GM12878 (cell line): ENCODE measurements at regions of chr1 and their contacts with region 1.

Region 1: DNA sequence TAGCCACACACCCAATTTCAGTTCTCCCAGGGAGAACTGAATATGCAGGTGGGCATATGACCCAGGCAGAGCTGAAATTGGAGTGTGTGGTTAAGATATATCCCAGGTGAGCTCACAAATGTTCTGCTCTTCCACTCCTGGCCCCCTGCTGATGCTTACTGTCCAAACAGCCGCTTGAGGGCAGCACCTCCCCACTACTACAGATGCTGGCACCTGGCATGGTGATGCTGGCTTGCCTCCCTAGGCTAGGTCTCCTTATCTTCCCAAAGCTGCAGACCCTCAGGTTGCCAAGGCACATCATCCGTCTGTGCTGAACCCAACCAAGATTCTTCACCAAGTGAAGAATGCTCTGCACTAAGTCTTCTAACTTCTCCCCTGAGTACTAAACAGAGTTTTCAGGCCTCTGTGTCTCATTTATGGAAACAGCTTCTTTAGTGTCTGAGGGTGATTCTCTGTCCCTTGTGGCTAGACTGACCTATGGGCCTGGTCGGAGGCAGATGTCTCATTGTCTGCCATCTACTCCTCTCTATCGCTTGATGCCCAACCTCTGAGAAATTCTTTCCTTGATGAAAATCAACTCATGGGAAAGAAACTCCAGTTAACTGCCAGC is 27.2 kb downstream of the XCL1 start:
- DNase-seq: peak; percentile 7
- ATAC-seq: peak; percentile 99
- H3K4me3 ChIP-seq: no peak overlapping the region
- H3K27ac ChIP-seq: no peak overlapping the region
- H3K4me1 ChIP-seq: no peaks in the 10 kb centered on the region
- H3K27me3 ChIP-seq: no peaks in the 10 kb centered on the region; a peak in 1 of 4 replicates
- CTCF ChIP-seq: peak; percentile 76 to 92 (median 80)
- EP300 ChIP-seq: no peak
- POLR2A ChIP-seq: no peak
- RAD21 ChIP-seq: peak; percentile 97

Region 2: DNA sequence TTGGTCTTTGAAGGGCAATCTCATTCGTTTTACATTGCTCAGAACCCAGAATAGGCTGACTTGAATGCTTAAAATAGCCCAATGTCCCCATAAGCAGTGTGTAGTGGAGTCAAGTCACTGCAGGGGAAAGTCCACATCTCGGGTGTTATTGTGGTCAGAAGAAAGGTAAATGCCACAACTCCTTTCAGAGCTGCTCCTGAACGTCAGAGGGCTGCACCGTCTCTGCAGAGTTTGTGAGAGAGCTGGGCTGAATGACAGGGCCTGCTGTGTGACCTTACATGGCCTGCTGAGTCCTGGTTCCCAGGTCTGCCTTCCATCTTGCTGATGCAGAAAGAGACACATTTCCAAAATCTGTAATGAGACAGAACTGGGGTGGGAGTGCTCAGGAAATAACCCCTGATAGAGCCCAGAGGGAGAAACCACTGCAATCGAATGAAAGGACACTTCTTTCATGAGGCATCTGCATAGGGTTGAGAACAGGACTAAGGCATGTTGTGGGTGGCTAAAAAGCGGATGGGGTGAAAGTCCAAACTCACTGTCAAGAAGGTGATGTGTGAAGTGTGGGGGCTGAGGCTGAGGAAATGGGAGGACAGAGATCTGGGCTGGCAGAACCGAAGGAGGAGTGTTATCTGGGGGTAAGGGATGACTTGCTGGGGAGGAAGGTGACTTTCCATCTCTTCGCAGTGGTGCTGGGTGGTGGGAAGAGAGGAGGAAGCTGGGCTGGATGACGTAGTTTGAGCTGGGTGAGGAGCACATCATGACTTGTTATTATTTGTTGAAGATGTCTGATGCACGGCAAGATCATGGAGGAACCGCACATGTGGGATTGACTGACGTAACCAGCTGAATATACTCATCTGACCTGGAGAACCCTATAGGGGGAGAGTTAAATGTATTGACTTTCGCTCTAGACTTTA is 93.5 kb before region 1 on chr1:
- CTCF ChIA-PET with region 1: interaction called, 9 read pairs
- POLR2A ChIA-PET with region 1: no interaction called
- RAD21 ChIA-PET with region 1: interaction called, 15 read pairs
- SMC1A ChIA-PET with region 1: interaction called, 4 read pairs
- in situ Hi-C with region 1: no loop called
- intact Hi-C with region 1: no loop called
- DNase-seq: peak; percentile 88
- ATAC-seq: peak; percentile 90
- H3K4me3 ChIP-seq: no peak overlapping the region
- H3K27ac ChIP-seq: peak overlapping the region; percentile 61
- H3K4me1 ChIP-seq: peaks cover 16% of the 10 kb centered on the region
- H3K27me3 ChIP-seq: no peaks in the 10 kb centered on the region
- CTCF ChIP-seq: no peak
- EP300 ChIP-seq: peak; percentile 12 to 64; a peak in 3 of 4 replicates
- POLR2A ChIP-seq: no peak
- RAD21 ChIP-seq: no peak; the same call in 1 of the 2 replicates

Region 3: GRCh38 chr1:168585191-168585590 is 18.4 kb before region 1 on chr1:
- CTCF ChIA-PET with region 1: interaction called, 32 read pairs
- POLR2A ChIA-PET with region 1: interaction called, 4 read pairs
- RAD21 ChIA-PET with region 1: interaction called, 11 read pairs
- SMC1A ChIA-PET with region 1: interaction called, 35 read pairs
- in situ Hi-C with region 1: no loop called
- intact Hi-C with region 1: no loop called
- DNase-seq: no peak
- ATAC-seq: no peak
- H3K4me3 ChIP-seq: no peak overlapping the region
- H3K27ac ChIP-seq: no peak overlapping the region
- H3K4me1 ChIP-seq: no peaks in the 10 kb centered on the region
- H3K27me3 ChIP-seq: peaks cover 0 to 2% of the 10 kb centered on the region in 2 experiments; a peak in 1 of 4 replicates
- CTCF ChIP-seq: no peak
- EP300 ChIP-seq: no peak
- POLR2A ChIP-seq: no peak
- RAD21 ChIP-seq: no peak

Region 4: GRCh38 chr1:168637350-168637991 is 33.9 kb after region 1 on chr1:
- CTCF ChIA-PET with region 1: interaction called, 35 read pairs
- POLR2A ChIA-PET with region 1: no interaction called
- RAD21 ChIA-PET with region 1: interaction called, 22 read pairs
- SMC1A ChIA-PET with region 1: interaction called, 28 read pairs
- in situ Hi-C with region 1: no loop called
- intact Hi-C with region 1: no loop called
- DNase-seq: no peak
- ATAC-seq: peak; percentile 92
- H3K4me3 ChIP-seq: no peak overlapping the region
- H3K27ac ChIP-seq: no peak overlapping the region
- H3K4me1 ChIP-seq: no peaks in the 10 kb centered on the region
- H3K27me3 ChIP-seq: no peaks in the 10 kb centered on the region
- CTCF ChIP-seq: peak; percentile 64 to 80 (median 73)
- EP300 ChIP-seq: no peak
- POLR2A ChIP-seq: no peak
- RAD21 ChIP-seq: peak; percentile 65

Region 5: GRCh38 chr1:169060906-169061639 is 457.5 kb after region 1 on chr1:
- CTCF ChIA-PET with region 1: no interaction called
- POLR2A ChIA-PET with region 1: no interaction called
- RAD21 ChIA-PET with region 1: no interaction called
- SMC1A ChIA-PET with region 1: no interaction called
- in situ Hi-C with region 1: no loop called
- intact Hi-C with region 1: no loop called
- DNase-seq: no peak
- ATAC-seq: no peak
- H3K4me3 ChIP-seq: no peak overlapping the region
- H3K27ac ChIP-seq: no peak overlapping the region
- H3K4me1 ChIP-seq: no peaks in the 10 kb centered on the region
- H3K27me3 ChIP-seq: no peaks in the 10 kb centered on the region
- CTCF ChIP-seq: no peak
- EP300 ChIP-seq: no peak
- POLR2A ChIP-seq: no peak
- RAD21 ChIP-seq: no peak

Region 6: GRCh38 chr1:169138866-169139670 is 535.5 kb after region 1 on chr1:
- CTCF ChIA-PET with region 1: interaction called, 7 read pairs
- POLR2A ChIA-PET with region 1: no interaction called
- RAD21 ChIA-PET with region 1: interaction called, 22 read pairs
- SMC1A ChIA-PET with region 1: interaction called, 17 read pairs
- in situ Hi-C with region 1: no loop called
- intact Hi-C with region 1: loop called (anchors 5 kb)
- DNase-seq: peak; percentile 55
- ATAC-seq: peak; percentile 96
- H3K4me3 ChIP-seq: no peak overlapping the region
- H3K27ac ChIP-seq: no peak overlapping the region
- H3K4me1 ChIP-seq: peaks cover 3% of the 10 kb centered on the region; the same call in 1 of the 2 replicates
- H3K27me3 ChIP-seq: no peaks in the 10 kb centered on the region
- CTCF ChIP-seq: no peak
- EP300 ChIP-seq: peak; percentile 86 to 89
- POLR2A ChIP-seq: no peak
- RAD21 ChIP-seq: no peak

Region 7: DNA sequence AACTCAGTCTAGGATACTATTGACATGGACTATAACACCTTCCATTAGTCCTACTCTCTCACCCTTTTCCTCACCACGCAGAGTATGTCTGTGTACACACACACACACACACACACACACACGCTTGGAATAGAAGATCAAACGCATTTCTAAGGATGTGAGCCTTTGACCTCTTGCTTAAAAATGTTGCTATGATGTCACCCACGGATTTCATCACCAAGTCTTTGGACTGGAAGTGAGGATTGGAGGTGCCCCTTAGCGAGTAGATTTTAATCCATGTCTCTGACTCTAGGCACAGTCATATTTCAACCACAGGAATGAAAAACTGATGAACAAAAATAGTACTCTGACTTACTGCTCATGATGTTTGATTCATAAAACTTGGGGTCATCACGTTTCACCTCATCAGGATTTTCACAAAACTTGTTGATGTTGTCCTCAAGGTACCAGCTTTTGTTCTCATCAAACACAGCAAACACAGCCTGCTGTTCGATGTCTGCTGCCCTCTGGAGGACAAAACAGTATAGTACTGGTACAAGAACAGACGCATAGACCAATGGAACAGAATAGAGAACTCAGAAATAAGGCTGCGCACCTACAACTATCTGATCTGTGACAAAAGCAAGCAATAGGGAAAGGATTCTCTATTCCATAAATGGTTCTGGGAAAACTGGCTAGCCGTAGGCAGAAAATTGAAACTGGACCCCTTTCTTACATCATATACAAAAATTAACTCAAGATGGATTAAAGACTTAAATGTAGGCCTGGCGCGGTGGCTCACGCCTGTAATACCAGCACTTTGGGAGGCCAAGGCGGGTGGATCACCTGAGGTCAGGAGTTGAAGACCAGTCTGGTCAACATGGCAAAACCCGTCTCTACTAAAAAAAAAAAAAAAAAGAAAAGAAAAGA is 942.7 kb after region 1 on chr1:
- CTCF ChIA-PET with region 1: interaction called, 15 read pairs
- POLR2A ChIA-PET with region 1: no interaction called
- RAD21 ChIA-PET with region 1: interaction called, 29 read pairs
- SMC1A ChIA-PET with region 1: interaction called, 6 read pairs
- in situ Hi-C with region 1: loop called (anchors 5 kb)
- intact Hi-C with region 1: loop called (anchors 1 kb)
- DNase-seq: peak; percentile 40
- ATAC-seq: peak; percentile 92
- H3K4me3 ChIP-seq: no peak overlapping the region
- H3K27ac ChIP-seq: no peak overlapping the region
- H3K4me1 ChIP-seq: no peaks in the 10 kb centered on the region
- H3K27me3 ChIP-seq: no peaks in the 10 kb centered on the region
- CTCF ChIP-seq: peak; percentile 63 to 69 (median 66)
- EP300 ChIP-seq: no peak
- POLR2A ChIP-seq: no peak
- RAD21 ChIP-seq: peak; percentile 75